PC-9 (cell line): ENCODE measurements at regions of chr1 and their contacts with region 1.

Region 1: GRCh38 chr1:41876576-41877445 is 41.9 kb downstream of the HIVEP3 start:
- DNase-seq: no peak
- H3K4me3 ChIP-seq: no peak overlapping the region
- H3K27ac ChIP-seq: no peak overlapping the region
- H3K4me1 ChIP-seq: peaks cover 46% of the 10 kb centered on the region
- H3K27me3 ChIP-seq: no peaks in the 10 kb centered on the region
- CTCF ChIP-seq: no peak

Region 2: DNA sequence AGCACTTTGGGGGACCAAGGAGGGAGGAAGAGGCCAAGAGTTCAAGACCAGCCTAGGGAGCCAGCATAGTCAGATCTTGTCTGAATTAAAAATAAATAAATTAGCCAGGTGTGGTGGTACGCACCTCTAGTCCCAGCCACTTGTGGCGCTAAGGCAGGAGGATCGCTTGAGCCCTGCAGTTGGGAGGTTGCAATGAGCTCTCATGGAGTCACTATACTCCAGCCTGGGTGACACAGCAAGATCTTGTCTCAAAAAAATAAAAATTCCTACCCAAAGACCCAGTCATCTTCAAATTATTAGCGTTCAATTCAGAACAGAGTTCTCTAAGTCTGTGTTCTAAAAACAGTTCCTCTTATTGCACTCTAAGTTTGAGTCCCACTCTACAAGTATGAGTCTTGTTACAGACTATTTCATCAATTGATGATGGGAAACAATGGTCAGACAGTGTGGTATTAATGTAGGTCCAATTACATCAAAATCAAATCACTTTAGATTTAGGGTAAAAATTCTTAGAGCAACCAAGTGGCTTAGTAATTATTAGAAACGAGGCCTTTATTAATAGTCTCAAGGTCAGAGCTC is 451.3 kb after region 1 on chr1:
- CTCF ChIA-PET with region 1: no interaction called
- POLR2A ChIA-PET with region 1: interaction called, 12 read pairs
- intact Hi-C with region 1: no loop called
- DNase-seq: no peak
- H3K4me3 ChIP-seq: no peak overlapping the region
- H3K27ac ChIP-seq: no peak overlapping the region
- H3K4me1 ChIP-seq: peaks cover 18% of the 10 kb centered on the region
- H3K27me3 ChIP-seq: no peaks in the 10 kb centered on the region
- CTCF ChIP-seq: no peak